Right ventricle myocardium inferior (tissue), 1 donor: ENCODE measurements at regions of chr4 and their contacts with region 1.

Region 1: DNA sequence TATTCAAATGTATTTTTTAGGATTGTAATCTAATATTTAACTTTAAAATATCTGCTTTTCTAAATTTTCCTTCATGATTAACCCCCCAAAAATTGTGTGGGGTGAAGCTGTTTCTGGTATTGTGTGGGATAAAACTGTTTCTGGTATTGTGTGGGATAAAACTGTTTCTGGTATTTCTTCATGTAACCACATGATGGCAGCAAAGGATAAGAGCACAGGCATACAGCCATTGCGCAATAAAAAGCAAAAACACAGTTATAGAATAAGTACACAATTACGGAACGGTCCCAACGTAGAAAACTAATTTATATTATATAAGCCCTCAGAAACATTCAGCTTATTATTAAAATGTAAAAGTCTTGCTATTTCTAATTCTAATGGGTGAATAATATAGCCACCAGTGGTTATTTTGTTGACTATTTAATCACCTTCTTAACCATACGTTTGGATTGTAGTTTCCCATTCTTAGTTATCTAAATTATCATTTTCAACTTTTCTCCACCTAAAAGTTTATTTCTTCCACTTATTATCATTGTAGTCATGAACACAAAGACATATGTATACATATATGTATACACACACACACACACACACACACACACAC is 333.9 kb upstream of the FSTL5 start:
- DNase-seq: no peak
- ATAC-seq: peak; percentile 79

Region 2: DNA sequence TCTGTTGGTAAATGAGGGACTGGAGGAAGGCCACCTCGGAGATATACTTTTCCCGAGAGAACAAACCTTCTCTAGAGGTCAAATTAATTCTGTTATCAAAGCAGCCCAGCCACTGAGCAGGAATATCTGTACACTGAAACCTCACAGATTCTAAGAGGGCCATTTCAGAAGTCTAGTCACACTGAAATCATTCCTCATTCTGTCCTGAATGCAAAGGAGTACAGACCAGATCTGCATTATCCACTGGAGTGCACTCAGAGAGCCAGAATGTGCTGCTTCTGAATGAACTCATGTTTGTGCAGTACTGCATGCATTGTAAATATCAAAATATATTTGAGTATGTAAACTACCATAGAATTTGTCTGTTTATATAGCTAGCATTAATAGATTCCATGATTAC is 55.5 kb before region 1 on chr4:
- intact Hi-C with region 1: no loop called
- DNase-seq: no peak
- ATAC-seq: no peak

Region 3: DNA sequence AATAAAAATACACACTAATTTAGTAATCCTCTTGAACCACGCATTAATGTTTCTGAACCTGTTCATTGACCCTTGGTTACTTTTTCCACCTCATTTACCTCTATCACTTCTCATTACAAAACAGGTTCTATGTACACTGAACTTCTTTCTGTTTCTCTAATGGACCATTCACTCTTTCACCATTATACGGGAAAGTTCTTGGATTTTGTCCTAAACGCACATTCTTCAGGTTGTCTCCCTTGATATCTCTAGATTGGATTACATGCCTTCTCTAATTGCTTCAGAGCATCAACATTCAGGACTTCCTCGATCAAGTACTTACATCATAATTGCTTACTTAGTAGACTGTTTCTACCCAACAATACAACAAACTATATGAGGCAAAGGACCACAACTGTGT is 25.5 kb after region 1 on chr4:
- intact Hi-C with region 1: no loop called
- DNase-seq: no peak
- ATAC-seq: no peak

Region 4: DNA sequence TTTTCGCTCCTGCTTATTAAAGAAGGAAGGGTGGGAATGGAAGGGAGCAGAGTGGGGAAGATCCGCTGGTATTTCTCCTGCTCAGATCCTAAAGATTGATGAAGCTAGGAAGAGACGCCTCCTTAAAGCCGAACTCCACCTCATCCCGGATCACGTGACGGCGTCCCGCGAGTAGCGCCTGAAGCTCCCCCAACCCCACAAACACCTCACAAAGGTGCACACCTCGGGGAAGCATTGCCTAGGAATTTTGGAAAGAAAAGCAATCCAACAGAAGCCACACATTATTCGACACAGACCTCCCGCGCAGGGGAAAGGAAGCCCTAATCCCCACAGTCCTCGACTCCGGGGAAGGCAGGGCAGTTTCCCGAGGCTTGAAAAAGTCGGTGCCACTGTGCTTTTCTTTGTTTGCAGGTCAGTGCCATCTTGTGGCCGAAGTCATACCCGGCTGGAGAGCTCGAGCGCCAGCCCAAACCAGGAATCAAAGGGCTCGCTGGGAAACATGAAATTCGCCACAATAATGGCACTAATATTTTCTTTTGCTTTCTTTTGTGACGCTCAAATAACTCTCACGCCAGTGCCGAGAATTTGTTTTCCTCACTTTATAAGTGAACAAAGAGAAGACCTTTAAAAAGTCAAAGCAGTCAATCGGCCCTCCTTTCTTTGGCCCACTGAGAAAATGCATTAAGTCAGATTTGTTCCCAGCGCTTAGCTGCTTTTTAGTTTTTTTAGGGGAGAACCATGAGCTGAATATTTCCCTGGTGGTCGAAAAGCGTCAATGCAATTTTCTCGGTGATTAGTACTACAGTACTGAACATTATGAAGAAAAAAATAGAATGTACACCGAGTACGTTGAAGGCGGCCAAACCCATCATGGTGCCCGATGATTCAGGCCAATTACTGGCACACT is 835.1 kb after region 1 on chr4 and contains the start of gene NPY1R:
- intact Hi-C with region 1: loop called (anchors 1 kb)
- DNase-seq: peak; percentile 65
- ATAC-seq: peak; percentile 89
- total RNA-seq, gene NPY1R: 0.46 TPM